Activated CD8-positive, alpha-beta T cell treated with anti-CD3 and anti-CD28 coated beads for 36 hours (primary cell): ENCODE measurements at regions of chr13 and their contacts with region 1.

Region 1: GRCh38 chr13:40666045-40666904 is at the start of gene FOXO1:
- DNase-seq: peak; percentile 84
- ATAC-seq: peak; percentile 72
- H3K4me3 Mint-ChIP-seq: peak within 1 kb of the TSS; percentile 85
- H3K27ac Mint-ChIP-seq: peak within 1 kb of the TSS; percentile 96
- H3K4me1 Mint-ChIP-seq: peaks cover 36% of the 10 kb centered on the region
- H3K27me3 Mint-ChIP-seq: no peaks in the 10 kb centered on the region
- CTCF ChIP-seq: no peak
- total RNA-seq, gene FOXO1: 30.6 to 30.8 TPM

Region 2: GRCh38 chr13:40388617-40389016 is 277.7 kb before region 1 on chr13:
- CTCF ChIA-PET with region 1: interaction called, 4 read pairs
- POLR2A ChIA-PET with region 1: interaction called, 12 read pairs
- intact Hi-C with region 1: loop called (anchors 5 kb)
- DNase-seq: peak; percentile 94
- ATAC-seq: peak; percentile 98
- H3K4me3 Mint-ChIP-seq: peak overlapping the region; percentile 77
- H3K27ac Mint-ChIP-seq: peak overlapping the region; percentile 95
- H3K4me1 Mint-ChIP-seq: peaks cover 49% of the 10 kb centered on the region
- H3K27me3 Mint-ChIP-seq: no peaks in the 10 kb centered on the region
- CTCF ChIP-seq: no peak

Region 3: DNA sequence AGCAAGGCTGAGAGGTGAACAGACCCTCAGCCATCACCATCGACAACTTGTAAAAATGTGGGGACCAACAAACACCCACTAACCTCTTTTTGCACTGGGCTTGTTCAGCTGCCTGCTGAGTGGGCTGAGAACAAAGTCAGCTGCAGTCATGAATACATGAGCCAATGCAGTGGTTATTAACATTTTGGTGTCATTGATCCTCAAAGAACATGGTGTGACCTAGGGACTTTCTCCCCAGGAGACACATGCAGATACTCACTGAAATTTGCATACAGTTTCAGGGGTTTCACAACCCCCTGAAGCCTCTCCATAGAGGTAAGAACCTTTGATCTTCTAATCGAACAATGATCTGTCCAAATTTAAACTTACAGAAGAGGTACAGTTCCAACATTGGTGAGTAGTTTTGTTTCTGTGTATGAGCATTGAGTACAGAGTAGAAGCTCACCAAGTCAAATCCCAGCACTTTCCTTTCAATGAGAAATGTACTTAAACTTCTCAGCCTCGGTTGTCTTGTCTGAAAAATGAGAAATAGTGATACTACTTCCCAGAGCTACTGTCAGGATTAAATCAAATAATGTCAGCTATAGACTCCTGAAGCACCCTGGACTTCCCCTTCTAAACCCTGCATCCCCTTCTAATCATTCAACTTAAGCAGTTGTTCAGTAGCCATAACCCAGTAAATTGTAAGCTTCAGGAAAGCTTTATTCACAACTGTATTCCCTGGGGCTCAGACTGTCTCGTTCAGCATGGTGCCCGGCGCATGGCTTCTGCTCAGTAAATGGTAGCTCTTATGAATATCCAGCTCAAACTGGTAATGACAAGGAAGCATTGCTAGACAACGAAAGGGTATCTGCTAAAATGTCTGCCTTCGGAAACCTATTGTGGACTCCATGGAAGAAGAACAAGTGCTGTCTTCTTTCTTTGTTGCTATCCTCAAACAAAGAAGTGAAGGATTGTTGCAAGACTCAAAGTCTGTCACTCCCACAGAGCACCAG is 148.5 kb before region 1 on chr13:
- CTCF ChIA-PET with region 1: interaction called, 7 read pairs
- POLR2A ChIA-PET with region 1: interaction called, 26 read pairs
- intact Hi-C with region 1: loop called (anchors 5 kb)
- DNase-seq: peak; percentile 66
- ATAC-seq: peak; percentile 80
- H3K4me3 Mint-ChIP-seq: peak overlapping the region; percentile 57
- H3K27ac Mint-ChIP-seq: peak overlapping the region; percentile 89
- H3K4me1 Mint-ChIP-seq: peaks cover 77% of the 10 kb centered on the region
- H3K27me3 Mint-ChIP-seq: no peaks in the 10 kb centered on the region
- CTCF ChIP-seq: no peak

Region 4: DNA sequence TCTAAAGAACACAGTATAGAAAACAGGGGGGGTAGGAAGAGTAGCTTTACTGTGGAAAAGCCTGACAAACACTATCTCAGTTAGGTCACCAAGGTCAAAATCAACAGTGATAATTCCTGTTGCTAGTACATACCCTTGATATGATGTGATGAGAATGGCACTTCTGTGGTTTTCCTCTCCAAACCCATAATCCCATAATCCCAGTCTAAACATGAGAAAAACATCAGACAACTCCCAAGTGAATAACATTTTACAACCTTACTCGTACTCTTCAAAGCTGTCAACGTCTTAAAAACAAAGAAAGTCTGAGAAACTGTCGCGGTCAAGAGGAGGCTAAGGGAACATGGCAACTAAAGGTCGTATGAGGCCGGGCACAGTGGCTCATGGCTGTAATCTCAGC is 137.4 kb before region 1 on chr13:
- CTCF ChIA-PET with region 1: no interaction called
- POLR2A ChIA-PET with region 1: no interaction called
- intact Hi-C with region 1: no loop called
- DNase-seq: no peak
- ATAC-seq: no peak
- H3K4me3 Mint-ChIP-seq: no peak overlapping the region
- H3K27ac Mint-ChIP-seq: no peak overlapping the region
- H3K4me1 Mint-ChIP-seq: peaks cover 27% of the 10 kb centered on the region
- H3K27me3 Mint-ChIP-seq: no peaks in the 10 kb centered on the region
- CTCF ChIP-seq: no peak

Region 5: GRCh38 chr13:40613192-40613818 is 53.0 kb before region 1 on chr13:
- CTCF ChIA-PET with region 1: interaction called, 9 read pairs
- POLR2A ChIA-PET with region 1: interaction called, 5 read pairs
- intact Hi-C with region 1: loop called (anchors 5 kb)
- DNase-seq: peak; percentile 73
- ATAC-seq: peak; percentile 90
- H3K4me3 Mint-ChIP-seq: peak overlapping the region; percentile 75
- H3K27ac Mint-ChIP-seq: peak overlapping the region; percentile 96
- H3K4me1 Mint-ChIP-seq: peaks cover 93% of the 10 kb centered on the region
- H3K27me3 Mint-ChIP-seq: no peaks in the 10 kb centered on the region
- CTCF ChIP-seq: no peak

Region 6: GRCh38 chr13:40682449-40683240 is 16.4 kb after region 1 on chr13:
- CTCF ChIA-PET with region 1: interaction called, 72 read pairs
- POLR2A ChIA-PET with region 1: interaction called, 3 read pairs
- intact Hi-C with region 1: no loop called
- DNase-seq: no peak
- ATAC-seq: peak; percentile 74
- H3K4me3 Mint-ChIP-seq: no peak overlapping the region
- H3K27ac Mint-ChIP-seq: no peak overlapping the region
- H3K4me1 Mint-ChIP-seq: peaks cover 7% of the 10 kb centered on the region
- H3K27me3 Mint-ChIP-seq: no peaks in the 10 kb centered on the region
- CTCF ChIP-seq: peak; percentile 78

Region 7: GRCh38 chr13:40777166-40777808 is 111.0 kb after region 1 on chr13:
- CTCF ChIA-PET with region 1: interaction called, 13 read pairs
- POLR2A ChIA-PET with region 1: interaction called, 3 read pairs
- intact Hi-C with region 1: loop called (anchors 10 kb)
- DNase-seq: peak; percentile 60
- ATAC-seq: peak; percentile 66
- H3K4me3 Mint-ChIP-seq: peak overlapping the region; percentile 62
- H3K27ac Mint-ChIP-seq: peak overlapping the region; percentile 100
- H3K4me1 Mint-ChIP-seq: peaks cover 33% of the 10 kb centered on the region
- H3K27me3 Mint-ChIP-seq: no peaks in the 10 kb centered on the region
- CTCF ChIP-seq: peak; percentile 93

Region 8: GRCh38 chr13:41040606-41041319 is 374.5 kb after region 1 on chr13:
- CTCF ChIA-PET with region 1: no interaction called
- POLR2A ChIA-PET with region 1: no interaction called
- intact Hi-C with region 1: no loop called
- DNase-seq: no peak
- ATAC-seq: no peak
- H3K4me3 Mint-ChIP-seq: no peak overlapping the region
- H3K27ac Mint-ChIP-seq: no peak overlapping the region
- H3K4me1 Mint-ChIP-seq: peaks cover 15% of the 10 kb centered on the region
- H3K27me3 Mint-ChIP-seq: no peaks in the 10 kb centered on the region
- CTCF ChIP-seq: no peak